H1 (cell line): ENCODE measurements at regions of chr12 and their contacts with region 1.

Region 1: DNA sequence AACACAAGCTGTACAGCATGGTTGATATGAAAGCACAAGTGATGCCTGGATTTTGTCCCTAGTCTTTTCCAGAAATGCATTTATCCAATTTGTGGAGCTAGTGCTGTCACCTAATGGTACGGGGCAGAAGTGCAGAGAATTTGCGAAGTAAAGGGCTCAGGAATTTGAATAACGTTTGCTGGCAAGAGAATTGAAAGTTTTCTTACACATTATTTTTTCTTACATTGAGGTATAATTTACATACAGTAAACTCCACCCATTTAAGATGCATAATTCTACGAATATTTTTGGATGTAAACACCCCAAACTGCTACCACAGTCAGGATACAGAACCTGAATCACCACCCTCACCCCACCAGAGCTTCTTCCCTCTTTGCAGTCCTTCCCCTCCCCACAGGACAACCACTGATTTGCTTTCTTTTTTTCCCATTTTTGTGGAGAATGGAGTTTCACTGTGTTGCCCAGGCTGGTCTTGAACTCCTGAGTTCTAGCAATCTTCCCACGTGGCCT is 3.5 kb downstream of the AICDA start:
- DNase-seq: no peak
- H3K4me3 ChIP-seq: no peak overlapping the region; a peak in 2 of 8 replicates
- H3K27ac ChIP-seq: no peak overlapping the region
- H3K4me1 ChIP-seq: peaks cover 0 to 4% (median 0%) of the 10 kb centered on the region in 4 experiments; a peak in 2 of 7 replicates
- H3K27me3 ChIP-seq: peaks cover 0 to 4% (median 0%) of the 10 kb centered on the region in 4 experiments; a peak in 3 of 7 replicates
- CTCF ChIP-seq: peak in 2 of 3 experiments; percentile 65 to 79; a peak in 3 of 4 replicates
- EP300 ChIP-seq: no peak
- POLR2A ChIP-seq: no peak
- RAD21 ChIP-seq: peak; percentile 66 to 75

Region 2: DNA sequence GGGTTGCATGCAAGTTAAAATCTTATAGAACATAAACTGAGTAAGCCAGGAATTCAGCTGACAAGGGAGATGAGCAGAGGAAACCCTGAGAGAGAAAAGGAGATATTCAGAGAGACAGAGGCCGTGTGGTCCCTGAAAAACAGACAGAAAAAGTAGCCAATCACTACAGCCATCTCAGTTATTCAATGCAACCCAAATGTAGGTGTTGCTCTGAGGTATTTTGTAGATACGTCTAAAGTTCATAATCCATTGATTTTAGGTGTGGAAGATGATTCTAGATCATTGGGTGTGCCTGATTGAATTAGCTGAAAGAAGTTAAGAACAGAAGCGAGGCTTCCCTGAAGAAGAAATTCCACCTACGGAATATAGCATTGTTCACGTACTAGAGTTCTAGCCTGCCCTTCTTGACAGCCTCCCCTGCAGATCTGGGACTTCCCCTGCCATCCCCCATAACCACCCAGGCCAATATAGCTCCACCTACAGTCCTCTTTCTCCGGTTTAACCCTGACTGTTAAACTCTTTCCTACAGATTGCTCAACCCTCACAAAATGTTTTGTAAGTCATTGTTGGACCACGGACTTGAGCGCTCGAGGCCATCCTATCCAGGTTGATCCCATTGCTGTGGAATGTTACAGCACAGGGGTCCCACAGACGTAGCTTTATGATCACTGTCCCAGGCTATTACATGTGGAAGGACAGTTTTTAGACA is 18.1 kb before region 1 on chr12:
- CTCF ChIA-PET with region 1: interaction called, 57 read pairs
- POLR2A ChIA-PET with region 1: no interaction called
- DNase-seq: no peak
- H3K4me3 ChIP-seq: no peak overlapping the region
- H3K27ac ChIP-seq: no peak overlapping the region
- H3K4me1 ChIP-seq: no peaks in the 10 kb centered on the region
- H3K27me3 ChIP-seq: no peaks in the 10 kb centered on the region
- CTCF ChIP-seq: peak in 2 of 3 experiments; percentile 21 to 33; a peak in 2 of 4 replicates
- EP300 ChIP-seq: no peak
- POLR2A ChIP-seq: no peak
- RAD21 ChIP-seq: no peak; a peak in 1 of 4 replicates

Region 3: GRCh38 chr12:8622646-8623045 is 13.5 kb after region 1 on chr12:
- CTCF ChIA-PET with region 1: interaction called, 21 read pairs
- POLR2A ChIA-PET with region 1: interaction called, 3 read pairs
- DNase-seq: no peak
- H3K4me3 ChIP-seq: no peak overlapping the region
- H3K27ac ChIP-seq: no peak overlapping the region
- H3K4me1 ChIP-seq: no peaks in the 10 kb centered on the region
- H3K27me3 ChIP-seq: no peaks in the 10 kb centered on the region
- CTCF ChIP-seq: no peak
- EP300 ChIP-seq: no peak
- POLR2A ChIP-seq: no peak
- RAD21 ChIP-seq: no peak

Region 4: GRCh38 chr12:8629486-8630033 is 20.4 kb after region 1 on chr12:
- CTCF ChIA-PET with region 1: interaction called, 21 read pairs
- POLR2A ChIA-PET with region 1: interaction called, 4 read pairs
- DNase-seq: no peak
- H3K4me3 ChIP-seq: no peak overlapping the region
- H3K27ac ChIP-seq: no peak overlapping the region
- H3K4me1 ChIP-seq: no peaks in the 10 kb centered on the region
- H3K27me3 ChIP-seq: no peaks in the 10 kb centered on the region; a peak in 1 of 7 replicates
- CTCF ChIP-seq: no peak
- EP300 ChIP-seq: no peak
- POLR2A ChIP-seq: no peak
- RAD21 ChIP-seq: no peak

Region 5: GRCh38 chr12:8665759-8666158 is 56.6 kb after region 1 on chr12:
- CTCF ChIA-PET with region 1: no interaction called
- POLR2A ChIA-PET with region 1: no interaction called
- DNase-seq: no peak
- H3K4me3 ChIP-seq: no peak overlapping the region
- H3K27ac ChIP-seq: no peak overlapping the region
- H3K4me1 ChIP-seq: no peaks in the 10 kb centered on the region; a peak in 1 of 7 replicates
- H3K27me3 ChIP-seq: no peaks in the 10 kb centered on the region
- CTCF ChIP-seq: no peak
- EP300 ChIP-seq: no peak
- POLR2A ChIP-seq: no peak
- RAD21 ChIP-seq: no peak